ENCODE measurements at regions of chr9 and their contacts with region 1.

Region 1: DNA sequence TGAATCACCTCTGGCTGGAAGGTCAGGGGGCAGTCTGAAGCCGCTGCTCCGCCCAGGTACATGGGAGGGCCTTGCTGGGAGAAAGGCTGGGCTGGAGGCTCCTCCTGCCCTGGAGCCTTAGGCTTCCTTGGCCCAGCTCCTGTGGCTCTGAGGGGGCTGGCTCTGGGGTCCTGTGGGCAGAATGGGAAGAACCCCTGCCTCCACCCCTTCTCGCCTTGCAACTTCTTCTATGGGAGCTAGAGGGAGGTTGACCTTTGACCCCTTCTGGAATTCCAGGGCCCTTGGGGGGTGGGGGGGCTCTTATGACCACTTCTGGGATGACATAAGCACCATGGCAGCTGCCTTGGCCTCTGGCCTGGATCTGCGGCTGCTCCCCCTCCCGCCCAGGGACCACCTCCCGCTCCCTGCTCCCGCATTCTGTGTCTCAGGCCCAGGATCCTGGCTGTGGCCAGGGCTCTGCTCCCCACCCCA is 32.2 kb downstream of the IER5L start:
- DNase-seq: peak; percentile 60
- ATAC-seq: peak; percentile 57
- H3K4me3 Mint-ChIP-seq: no peak overlapping the region
- H3K27ac Mint-ChIP-seq: peak overlapping the region; percentile 87
- H3K4me1 Mint-ChIP-seq: peaks cover 54% of the 10 kb centered on the region
- H3K27me3 Mint-ChIP-seq: no peaks in the 10 kb centered on the region
- CTCF ChIP-seq: no peak

Region 2: GRCh38 chr9:128643519-128644300 is 502.1 kb before region 1 on chr9:
- CTCF ChIA-PET with region 1: no interaction called
- POLR2A ChIA-PET with region 1: no interaction called
- DNase-seq: no peak
- ATAC-seq: no peak
- H3K4me3 Mint-ChIP-seq: no peak overlapping the region
- H3K27ac Mint-ChIP-seq: peak overlapping the region; percentile 78; the same call in 1 of the 2 replicates
- H3K4me1 Mint-ChIP-seq: no peaks in the 10 kb centered on the region
- H3K27me3 Mint-ChIP-seq: no peaks in the 10 kb centered on the region
- CTCF ChIP-seq: no peak

Region 3: GRCh38 chr9:129166623-129167557 is 21.0 kb after region 1 on chr9:
- CTCF ChIA-PET with region 1: interaction called, 345 read pairs
- POLR2A ChIA-PET with region 1: interaction called, 7 read pairs
- DNase-seq: peak; percentile 67
- ATAC-seq: peak; percentile 77
- H3K4me3 Mint-ChIP-seq: peak overlapping the region; percentile 60
- H3K27ac Mint-ChIP-seq: peak overlapping the region; percentile 78
- H3K4me1 Mint-ChIP-seq: peaks cover 36% of the 10 kb centered on the region
- H3K27me3 Mint-ChIP-seq: peaks cover 12% of the 10 kb centered on the region
- CTCF ChIP-seq: no peak

Region 4: GRCh38 chr9:129516996-129517395 is 371.1 kb after region 1 on chr9:
- CTCF ChIA-PET with region 1: no interaction called
- POLR2A ChIA-PET with region 1: no interaction called
- DNase-seq: no peak
- ATAC-seq: no peak
- H3K4me3 Mint-ChIP-seq: no peak overlapping the region
- H3K27ac Mint-ChIP-seq: no peak overlapping the region; the same call in 1 of the 2 replicates
- H3K4me1 Mint-ChIP-seq: peaks cover 8% of the 10 kb centered on the region
- H3K27me3 Mint-ChIP-seq: peaks cover 9% of the 10 kb centered on the region
- CTCF ChIP-seq: no peak